Posterior vena cava (tissue), 2 donors: ENCODE measurements at regions of chr19 and their contacts with region 1.

Region 1: DNA sequence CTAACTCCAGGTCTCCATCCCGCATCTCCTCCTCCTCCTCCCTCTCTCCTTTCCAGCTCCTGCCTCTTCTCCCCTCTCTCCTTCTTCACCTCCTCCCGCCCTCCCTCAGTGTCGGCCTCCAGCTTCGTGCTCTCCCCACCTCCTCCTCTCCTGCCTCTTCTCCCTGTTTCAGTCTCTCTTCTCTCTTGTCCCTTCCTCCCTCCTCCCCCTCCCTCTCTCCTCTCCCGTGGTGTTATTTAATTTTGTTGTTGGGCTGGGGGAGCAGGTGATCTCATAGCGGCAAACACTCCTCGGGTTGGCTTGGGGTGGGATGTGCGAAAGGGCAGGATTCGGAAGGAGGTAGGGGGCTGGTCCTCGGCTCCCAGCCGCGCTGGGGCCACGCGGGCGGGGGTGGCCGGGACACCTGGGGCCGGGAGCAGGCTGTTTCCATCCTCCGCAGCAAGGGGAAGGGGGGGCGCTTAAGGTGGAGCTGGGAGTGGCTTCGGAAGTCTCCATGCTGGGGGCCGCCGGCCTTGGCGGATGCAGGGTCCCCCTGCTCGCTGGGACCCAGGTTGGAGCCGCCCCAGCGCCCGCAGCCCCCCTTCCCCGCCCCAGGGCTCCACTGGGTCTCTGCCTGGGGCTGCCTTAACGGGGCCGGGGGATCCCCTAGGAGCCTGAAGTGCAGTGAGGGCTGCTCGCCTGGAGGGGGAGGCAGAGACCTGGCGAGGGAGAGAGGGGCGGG is at the start of gene CA11:
- DNase-seq: peak; percentile 95
- total RNA-seq, gene CA11: 4.8 to 5.7 TPM

Region 2: DNA sequence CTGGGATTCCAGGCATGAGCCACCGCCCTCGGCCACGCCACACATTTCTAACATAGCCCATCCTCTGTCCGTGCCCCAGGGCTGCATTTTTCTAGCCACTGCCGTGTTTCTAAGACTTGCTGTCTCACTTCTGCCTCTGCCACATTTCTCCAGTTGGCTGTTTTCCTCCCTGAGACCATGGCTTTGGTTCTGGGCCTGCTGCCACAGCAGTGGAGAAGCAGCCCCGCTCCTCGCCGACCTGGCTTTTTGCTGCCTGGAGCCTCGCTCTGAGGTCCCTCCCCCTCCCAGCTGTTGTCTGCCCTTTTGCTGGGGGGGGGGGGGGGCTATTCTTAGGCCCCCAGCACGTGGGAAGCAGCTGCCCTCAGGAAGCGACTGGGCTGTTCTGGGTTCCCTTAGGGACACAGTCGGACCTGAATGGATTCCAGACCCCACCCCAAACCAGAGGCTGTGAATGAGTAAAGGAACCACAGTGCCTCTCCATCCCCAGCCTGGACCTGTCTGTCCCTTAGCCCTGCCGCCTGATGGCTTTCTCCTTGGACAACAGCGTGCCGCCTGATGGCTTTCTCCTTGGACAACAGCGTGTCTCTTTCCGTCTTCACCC is 343.6 kb after region 1 on chr19:
- intact Hi-C with region 1: loop called in 1 of 2 experiments (anchors 5 kb)
- DNase-seq: no peak